Endothelial cell of umbilical vein (primary cell): ENCODE measurements at regions of chr12 and their contacts with region 1.

Region 1: DNA sequence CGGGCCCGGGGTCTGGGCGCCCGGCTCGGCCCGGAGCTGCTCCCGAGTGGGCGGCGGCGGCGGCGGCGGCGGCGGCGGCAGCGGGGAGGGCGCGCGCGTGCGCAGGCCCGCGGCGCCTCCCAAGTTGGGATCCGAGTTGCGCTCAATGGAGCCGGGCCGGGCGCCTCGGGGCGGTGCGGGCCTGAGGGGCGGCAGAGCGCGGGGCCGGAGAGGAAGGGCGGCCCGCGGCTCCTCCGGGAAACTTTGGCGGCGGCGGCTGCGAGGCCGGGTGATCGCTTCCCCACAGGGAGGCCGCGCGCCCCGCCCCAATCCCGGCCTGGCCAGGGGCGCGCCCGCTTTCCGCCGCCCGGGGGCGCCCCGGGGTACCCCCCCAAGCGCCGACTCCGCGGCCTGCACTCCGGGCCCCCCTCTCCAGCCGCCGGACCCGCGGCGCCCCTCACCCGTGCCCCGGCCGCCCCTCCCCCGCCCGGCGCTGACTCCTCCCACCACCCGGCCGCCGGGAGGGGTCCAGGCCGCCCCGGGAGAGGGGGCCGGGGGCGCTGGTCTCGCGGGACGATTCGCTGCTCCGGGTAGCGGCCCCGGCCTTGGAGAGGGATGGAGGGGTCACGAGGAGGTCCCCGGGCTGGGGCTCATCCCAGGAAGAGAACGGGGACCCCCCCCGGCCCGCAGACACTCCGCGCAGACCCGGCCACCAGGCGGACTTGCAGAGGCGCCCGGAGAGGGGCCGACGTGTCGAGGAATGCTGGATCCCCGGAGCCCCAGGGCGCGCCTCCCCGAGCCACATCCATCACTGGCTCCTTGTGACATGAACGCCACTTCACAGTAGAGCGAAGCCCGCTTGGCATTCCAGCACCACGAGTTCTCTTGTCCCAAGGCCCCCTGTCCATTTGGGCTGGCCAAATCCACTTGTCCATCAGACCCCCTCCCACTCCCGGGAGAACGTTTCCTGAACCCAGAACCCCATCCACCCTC is at the start of gene RILPL1:
- DNase-seq: peak; percentile 50
- H3K4me3 ChIP-seq: peak within 1 kb of the TSS; percentile 35 to 81 (median 64)
- H3K27ac ChIP-seq: peak within 1 kb of the TSS; percentile 53
- H3K4me1 ChIP-seq: peaks cover 23% of the 10 kb centered on the region
- H3K27me3 ChIP-seq: peaks cover 0 to 1% of the 10 kb centered on the region in 2 experiments
- CTCF ChIP-seq: peak; percentile 9 to 41
- POLR2A ChIP-seq: no peak
- total RNA-seq, gene RILPL1: 29.7 and 30.4 TPM in 2 replicates

Region 2: DNA sequence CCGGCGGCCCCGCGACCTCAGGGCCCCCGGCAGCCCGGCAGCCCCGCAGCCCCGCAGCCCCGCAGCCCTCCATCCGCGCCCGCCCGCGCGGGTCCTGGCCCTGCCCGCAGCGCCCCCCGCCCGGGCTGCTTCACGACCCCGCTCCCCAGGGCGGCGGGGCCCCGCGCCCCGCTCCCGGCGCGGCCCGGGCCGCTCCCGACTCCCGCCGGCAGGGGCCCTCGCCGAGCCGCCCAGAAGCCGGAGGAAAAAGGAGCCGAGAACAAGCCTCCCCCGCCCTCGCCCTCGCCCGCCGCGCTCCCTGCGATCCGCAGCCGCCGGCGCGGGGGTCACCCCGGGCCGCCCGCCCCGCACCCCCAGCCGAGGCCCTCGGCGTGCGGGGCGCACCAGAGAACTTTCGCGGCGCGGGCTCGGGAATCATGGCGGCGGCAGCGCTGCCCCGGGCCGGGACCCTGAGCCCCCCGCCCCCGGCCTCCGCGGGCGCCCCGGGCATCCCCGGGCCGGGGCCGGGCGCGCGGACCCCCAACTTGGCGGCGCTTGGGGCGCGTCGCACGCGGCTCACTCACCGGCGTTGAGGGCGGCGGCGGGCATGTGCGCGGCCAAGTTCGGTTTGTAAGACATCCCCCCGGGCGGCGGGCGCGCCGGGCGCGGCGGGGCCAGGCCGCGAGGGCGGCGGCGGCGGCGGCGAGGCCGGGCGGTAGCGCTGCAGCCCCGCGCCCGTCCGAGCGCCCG is 262.8 kb before region 1 on chr12:
- CTCF ChIA-PET with region 1: no interaction called
- POLR2A ChIA-PET with region 1: no interaction called
- dilution Hi-C with region 1: no loop called
- intact Hi-C with region 1: loop called (anchors 2 kb)
- DNase-seq: no peak
- H3K4me3 ChIP-seq: peak overlapping the region; percentile 32 to 90 (median 87)
- H3K27ac ChIP-seq: peak overlapping the region; percentile 83
- H3K4me1 ChIP-seq: peaks cover 26% of the 10 kb centered on the region
- H3K27me3 ChIP-seq: no peaks in the 10 kb centered on the region
- CTCF ChIP-seq: peak; percentile 42 to 57
- POLR2A ChIP-seq: no peak

Region 3: GRCh38 chr12:123382684-123383083 is 151.3 kb before region 1 on chr12:
- CTCF ChIA-PET with region 1: no interaction called
- POLR2A ChIA-PET with region 1: no interaction called
- dilution Hi-C with region 1: no loop called
- intact Hi-C with region 1: loop called (anchors 2 kb)
- DNase-seq: no peak
- H3K4me3 ChIP-seq: no peak overlapping the region
- H3K27ac ChIP-seq: no peak overlapping the region
- H3K4me1 ChIP-seq: peaks cover 8% of the 10 kb centered on the region
- H3K27me3 ChIP-seq: no peaks in the 10 kb centered on the region
- CTCF ChIP-seq: no peak
- POLR2A ChIP-seq: no peak

Region 4: GRCh38 chr12:123436017-123436964 is 97.7 kb before region 1 on chr12 and contains the start of gene RILPL2:
- CTCF ChIA-PET with region 1: no interaction called
- POLR2A ChIA-PET with region 1: no interaction called
- dilution Hi-C with region 1: no loop called
- intact Hi-C with region 1: loop called (anchors 2 kb)
- DNase-seq: peak; percentile 77
- H3K4me3 ChIP-seq: peak within 1 kb of the TSS; percentile 44 to 57 (median 46)
- H3K27ac ChIP-seq: peak within 1 kb of the TSS; percentile 1
- H3K4me1 ChIP-seq: peaks cover 13% of the 10 kb centered on the region
- H3K27me3 ChIP-seq: no peaks in the 10 kb centered on the region
- CTCF ChIP-seq: no peak
- POLR2A ChIP-seq: no peak
- total RNA-seq, gene RILPL2: 4.6 and 7.2 TPM in 2 replicates

Region 5: GRCh38 chr12:123478762-123479161 is 55.2 kb before region 1 on chr12:
- CTCF ChIA-PET with region 1: no interaction called
- POLR2A ChIA-PET with region 1: no interaction called
- dilution Hi-C with region 1: no loop called
- intact Hi-C with region 1: loop called (anchors 2 kb)
- DNase-seq: peak; percentile 94
- H3K4me3 ChIP-seq: no peak overlapping the region
- H3K27ac ChIP-seq: peak overlapping the region; percentile 83
- H3K4me1 ChIP-seq: peaks cover 20% of the 10 kb centered on the region
- H3K27me3 ChIP-seq: no peaks in the 10 kb centered on the region
- CTCF ChIP-seq: no peak
- POLR2A ChIP-seq: no peak

Region 6: DNA sequence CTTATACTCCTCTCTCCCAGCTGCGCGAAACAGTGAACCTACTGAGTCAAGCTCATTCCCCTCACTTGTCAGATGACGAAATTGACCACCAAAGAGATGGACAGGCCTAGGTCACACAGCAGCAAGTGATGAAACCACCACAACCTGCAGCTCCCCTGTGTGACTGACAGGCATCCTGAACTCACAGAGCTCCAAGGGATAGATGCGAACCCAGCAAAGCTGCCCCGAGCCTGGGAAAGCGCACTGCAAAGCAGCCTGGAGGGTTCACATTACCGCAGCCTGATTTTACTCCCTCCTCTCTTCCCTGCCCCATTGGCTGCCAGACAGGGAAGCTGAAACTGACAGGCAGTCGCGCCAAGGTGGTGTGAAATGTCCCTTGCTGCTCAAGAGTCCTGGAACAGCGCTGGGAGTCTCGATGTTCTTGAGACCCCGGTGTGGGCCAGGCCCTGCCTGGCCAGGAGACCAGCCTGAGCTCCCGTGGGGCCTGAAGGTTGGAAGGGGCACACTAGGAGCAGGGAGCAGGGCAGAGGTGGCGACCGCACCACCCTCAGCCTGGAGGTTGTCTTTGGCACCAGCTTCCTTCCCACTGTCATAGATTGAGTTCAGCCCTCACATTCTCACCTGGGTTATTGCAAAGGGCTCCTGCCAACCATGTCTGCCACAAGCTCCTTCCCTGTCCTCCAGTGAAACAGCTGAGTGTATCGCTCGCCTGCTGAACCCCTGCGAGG is 39.7 kb before region 1 on chr12:
- CTCF ChIA-PET with region 1: no interaction called
- POLR2A ChIA-PET with region 1: no interaction called
- dilution Hi-C with region 1: no loop called
- intact Hi-C with region 1: no loop called
- DNase-seq: no peak
- H3K4me3 ChIP-seq: no peak overlapping the region
- H3K27ac ChIP-seq: no peak overlapping the region
- H3K4me1 ChIP-seq: no peaks in the 10 kb centered on the region
- H3K27me3 ChIP-seq: no peaks in the 10 kb centered on the region
- CTCF ChIP-seq: no peak
- POLR2A ChIP-seq: no peak